ENCODE measurements at regions of chr7 and their contacts with region 1.

Region 1: DNA sequence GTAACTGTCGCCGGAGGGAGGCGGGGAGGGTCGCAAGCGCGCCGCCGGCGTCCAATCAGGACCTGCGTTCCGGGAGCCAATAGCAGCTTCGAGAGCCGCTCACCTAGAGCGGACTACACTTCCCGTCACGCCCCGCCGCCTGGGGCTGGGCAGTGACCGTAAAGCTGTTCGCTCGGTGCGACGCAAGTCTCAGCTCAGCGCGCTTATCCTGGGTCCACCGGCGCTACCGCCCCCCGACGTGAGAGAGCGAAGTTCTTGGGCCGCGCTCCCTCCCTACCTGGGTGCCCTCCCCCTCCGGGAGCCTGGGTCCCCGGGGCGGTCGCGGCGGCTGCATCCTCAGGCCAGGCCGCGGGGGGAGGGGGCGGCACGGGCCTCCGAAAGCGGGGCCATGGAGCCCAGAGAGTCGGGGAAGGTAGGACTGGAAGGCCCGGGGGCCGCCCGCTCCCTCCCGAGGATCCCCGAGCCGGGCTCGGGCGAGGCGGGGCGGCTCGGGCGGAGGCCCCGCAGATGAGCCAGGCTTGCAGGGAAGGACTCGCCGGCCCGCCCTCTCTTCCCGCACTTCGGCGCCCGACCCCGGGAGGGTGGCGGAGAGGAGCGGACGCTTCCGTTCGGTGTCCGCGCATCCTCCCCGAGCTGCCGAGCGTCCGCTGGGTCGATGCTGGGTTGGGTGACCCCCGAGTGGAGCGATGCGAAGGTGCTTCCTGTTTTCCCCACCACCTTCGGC is at the start of gene ZNF862:
- DNase-seq: peak; percentile 99
- H3K4me3 ChIP-seq: peak within 1 kb of the TSS; percentile 87 to 95
- H3K27ac ChIP-seq: peak within 1 kb of the TSS; percentile 89 to 92
- H3K4me1 ChIP-seq: no peaks in the 10 kb centered on the region
- H3K27me3 ChIP-seq: no peaks in the 10 kb centered on the region
- CTCF ChIP-seq: peak in 3 of 4 experiments; percentile 13 to 29 (median 20)
- POLR2A ChIP-seq: peak; percentile 95
- total RNA-seq, gene ZNF862: 19.8 to 25.4 TPM

Region 2: DNA sequence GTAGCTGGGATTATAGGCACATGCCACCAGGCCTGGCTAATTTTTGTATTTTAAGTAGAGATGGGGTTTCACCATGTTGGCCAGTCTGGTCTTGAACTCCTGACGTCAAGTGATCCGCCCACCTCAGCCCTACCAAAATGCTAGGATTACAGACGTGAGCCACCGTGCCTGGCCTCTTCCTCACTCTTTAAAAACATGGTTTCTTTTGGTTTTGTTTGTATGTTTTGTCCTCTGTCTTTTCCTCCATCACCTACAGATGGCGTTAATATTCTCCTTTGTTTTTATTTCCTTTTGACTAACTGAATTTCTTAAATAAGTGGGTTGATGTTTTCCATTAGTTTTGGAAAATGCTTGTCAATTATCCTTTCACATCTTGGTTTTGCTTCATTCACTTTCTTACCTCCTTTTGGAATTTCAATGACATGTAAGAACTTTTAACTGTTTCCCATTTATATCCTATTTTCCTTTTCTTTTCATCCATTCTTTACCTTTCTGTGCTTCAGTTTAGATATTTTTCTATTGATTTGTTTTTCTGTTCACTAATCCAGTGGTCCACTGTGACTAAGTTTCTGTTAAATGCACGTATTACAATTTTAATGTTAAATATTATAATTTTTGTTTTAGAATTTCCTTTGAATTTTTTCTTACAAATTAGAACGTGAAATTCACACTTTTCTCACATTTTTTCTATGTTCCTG is 169.1 kb before region 1 on chr7:
- intact Hi-C with region 1: no loop called
- DNase-seq: no peak
- H3K4me3 ChIP-seq: no peak overlapping the region
- H3K27ac ChIP-seq: no peak overlapping the region
- H3K4me1 ChIP-seq: no peaks in the 10 kb centered on the region
- H3K27me3 ChIP-seq: no peaks in the 10 kb centered on the region
- CTCF ChIP-seq: peak in 1 of 4 experiments; percentile 42
- POLR2A ChIP-seq: no peak

Region 3: GRCh38 chr7:149771721-149772240 is 66.6 kb before region 1 on chr7:
- intact Hi-C with region 1: loop called (anchors 5 kb)
- DNase-seq: peak; percentile 87
- H3K4me3 ChIP-seq: peak overlapping the region; percentile 54 to 61
- H3K27ac ChIP-seq: peak overlapping the region; percentile 60 to 63
- H3K4me1 ChIP-seq: no peaks in the 10 kb centered on the region
- H3K27me3 ChIP-seq: no peaks in the 10 kb centered on the region
- CTCF ChIP-seq: no peak
- POLR2A ChIP-seq: peak; percentile 58

Region 4: GRCh38 chr7:149873074-149873969 is 34.9 kb after region 1 on chr7 and contains the start of gene ATP6V0E2:
- intact Hi-C with region 1: loop called (anchors 2 kb)
- DNase-seq: peak; percentile 95
- H3K4me3 ChIP-seq: peak within 1 kb of the TSS; percentile 61 to 82
- H3K27ac ChIP-seq: peak within 1 kb of the TSS; percentile 82 to 91
- H3K4me1 ChIP-seq: peaks cover 4% of the 10 kb centered on the region
- H3K27me3 ChIP-seq: no peaks in the 10 kb centered on the region
- CTCF ChIP-seq: no peak
- POLR2A ChIP-seq: peak; percentile 71
- total RNA-seq, gene ATP6V0E2: 67.3 to 95.3 TPM

Region 5: DNA sequence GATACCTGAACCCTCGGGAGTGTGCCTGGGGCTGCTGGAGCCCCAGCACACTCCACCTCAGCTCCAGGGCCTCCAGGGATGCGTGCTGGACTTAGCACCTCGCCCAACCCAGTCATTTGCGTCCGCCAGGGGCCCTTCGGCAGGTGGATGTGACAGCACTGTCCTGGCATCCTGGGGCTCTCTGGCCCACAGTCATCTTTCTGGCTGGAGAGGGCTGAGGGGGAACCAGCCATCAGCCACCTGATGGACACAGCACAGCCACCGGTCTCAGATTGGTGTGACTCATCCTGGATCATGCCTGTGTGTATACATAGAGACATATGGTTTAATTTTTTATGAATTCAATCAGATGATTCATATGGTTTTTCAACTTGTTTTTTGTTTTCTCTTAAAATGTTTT is 551.8 kb after region 1 on chr7:
- intact Hi-C with region 1: loop called (anchors 10 kb)
- DNase-seq: no peak
- H3K4me3 ChIP-seq: no peak overlapping the region
- H3K27ac ChIP-seq: no peak overlapping the region
- H3K4me1 ChIP-seq: no peaks in the 10 kb centered on the region
- H3K27me3 ChIP-seq: no peaks in the 10 kb centered on the region
- CTCF ChIP-seq: no peak
- POLR2A ChIP-seq: no peak

Region 6: GRCh38 chr7:150538259-150538658 is 699.9 kb after region 1 on chr7:
- intact Hi-C with region 1: no loop called
- DNase-seq: no peak
- H3K4me3 ChIP-seq: no peak overlapping the region
- H3K27ac ChIP-seq: no peak overlapping the region
- H3K4me1 ChIP-seq: no peaks in the 10 kb centered on the region
- H3K27me3 ChIP-seq: no peaks in the 10 kb centered on the region
- CTCF ChIP-seq: no peak
- POLR2A ChIP-seq: no peak